ENCODE measurements at regions of chr1 and their contacts with region 1.

Region 1: DNA sequence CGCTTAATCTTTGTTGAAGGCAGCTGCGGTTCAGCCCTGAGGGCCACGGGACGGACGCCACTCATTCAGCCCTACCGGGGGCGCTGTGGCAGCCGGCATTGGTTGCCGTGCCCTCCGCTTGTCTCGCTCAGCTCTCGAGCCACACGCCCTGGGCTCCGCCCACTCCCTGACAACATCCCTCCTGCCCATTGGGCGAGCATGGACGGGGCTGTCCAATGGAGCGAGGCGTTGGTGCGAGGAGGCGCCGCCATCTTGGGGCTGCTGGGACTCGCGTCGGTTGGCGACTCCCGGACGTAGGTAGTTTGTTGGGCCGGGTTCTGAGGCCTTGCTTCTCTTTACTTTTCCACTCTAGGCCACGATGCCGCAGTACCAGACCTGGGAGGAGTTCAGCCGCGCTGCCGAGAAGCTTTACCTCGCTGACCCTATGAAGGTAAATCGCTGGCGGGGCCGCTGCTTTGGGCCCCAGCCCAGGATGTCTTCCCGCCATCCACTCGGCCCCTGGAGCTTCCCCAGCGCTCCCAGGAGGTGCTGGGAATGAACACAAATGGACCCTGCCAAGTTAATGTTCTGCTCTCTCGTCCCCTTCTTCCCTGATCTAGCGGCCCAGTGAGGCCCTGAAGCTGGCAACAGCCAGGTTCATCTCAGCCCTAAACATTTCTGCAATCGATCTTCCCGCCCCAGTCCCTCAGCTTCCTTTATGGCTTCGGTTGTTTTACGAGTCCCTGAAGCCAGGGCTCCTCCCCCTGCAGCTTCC is at the start of gene SRP9:
- DNase-seq: peak; percentile 99 to 100 (median 99)
- ATAC-seq: peak; percentile 98
- H3K4me3 ChIP-seq: peak within 1 kb of the TSS; percentile 29
- H3K4me1 ChIP-seq: peaks cover 27% of the 10 kb centered on the region
- CTCF ChIP-seq: peak; percentile 91
- total RNA-seq, gene SRP9: 168 to 208 (median 187) TPM

Region 2: GRCh38 chr1:225554216-225554812 is 223.4 kb before region 1 on chr1:
- intact Hi-C with region 1: loop called in 1 of 2 experiments (anchors 10 kb)
- DNase-seq: no peak
- ATAC-seq: no peak
- H3K4me3 ChIP-seq: no peak overlapping the region
- H3K4me1 ChIP-seq: no peaks in the 10 kb centered on the region
- CTCF ChIP-seq: no peak